HEK293 (cell line): ENCODE measurements at regions of chr15 and their contacts with region 1.

Region 1: DNA sequence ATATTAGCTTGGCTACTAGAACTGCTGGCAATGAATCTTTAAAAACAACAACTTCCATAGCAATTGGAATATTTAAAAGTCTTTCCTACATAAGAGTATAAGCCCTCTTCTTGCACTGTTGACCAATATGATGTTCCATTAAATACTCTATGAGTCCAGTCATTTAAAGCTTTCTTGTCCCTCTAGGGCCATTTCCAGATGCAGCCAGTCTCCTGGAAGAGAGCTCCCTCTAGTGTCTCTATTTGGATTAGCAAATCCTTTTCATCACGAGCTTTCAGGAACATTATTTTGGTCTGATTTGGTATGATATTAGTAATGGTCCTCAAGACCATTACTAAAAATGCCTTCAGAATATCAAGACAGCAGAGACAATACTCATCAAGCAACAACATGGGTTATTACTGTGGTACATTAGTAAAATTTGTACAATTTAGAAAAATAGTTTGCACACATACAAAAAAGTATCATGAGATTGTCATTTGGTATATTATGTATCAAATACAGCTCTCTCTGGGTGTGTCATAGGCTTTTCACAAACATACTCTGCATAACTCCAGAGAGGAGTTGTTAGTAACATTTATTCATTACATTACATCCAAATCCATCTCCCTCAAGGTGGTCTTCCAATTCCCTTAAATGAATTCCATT is 101.3 kb downstream of the DPH6 start:
- H3K4me3 ChIP-seq: no peak overlapping the region
- H3K27ac ChIP-seq: no peak overlapping the region
- H3K4me1 ChIP-seq: no peaks in the 10 kb centered on the region
- CTCF ChIP-seq: 0 out of 2 replicates have a peak, but pooled peaks have one; percentile 28

Region 2: GRCh38 chr15:35078221-35078915 is 366.3 kb before region 1 on chr15:
- CTCF ChIA-PET with region 1: interaction called, 47 read pairs
- POLR2A ChIA-PET with region 1: no interaction called
- H3K4me3 ChIP-seq: no peak overlapping the region
- H3K27ac ChIP-seq: no peak overlapping the region
- H3K4me1 ChIP-seq: no peaks in the 10 kb centered on the region
- CTCF ChIP-seq: peak; percentile 58

Region 3: DNA sequence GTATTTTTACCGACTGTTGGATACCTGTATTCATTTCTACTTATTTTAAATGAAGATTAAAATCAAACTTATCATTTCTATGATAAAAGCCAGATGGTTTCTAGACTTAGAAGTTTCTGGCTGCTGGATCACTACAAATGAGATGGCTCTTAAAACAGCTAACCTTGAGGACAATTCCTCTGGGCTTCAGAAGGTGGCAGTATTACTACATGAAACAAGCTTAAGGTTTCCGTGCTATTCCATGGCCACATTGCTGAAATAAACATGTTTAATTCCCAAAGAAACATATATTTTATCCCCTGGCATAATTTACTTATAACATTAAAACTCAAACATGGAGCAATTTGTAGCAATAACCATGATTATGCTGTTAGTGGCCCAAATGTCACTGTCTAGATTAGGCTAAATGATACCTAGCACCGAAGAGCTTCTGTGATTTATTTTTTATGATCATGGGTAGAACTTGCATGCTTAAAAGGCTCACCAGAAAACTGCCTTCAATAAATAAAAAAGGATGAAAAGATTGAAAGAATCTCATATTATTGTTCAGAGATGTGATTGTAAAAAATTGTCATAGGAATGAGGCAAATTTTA is 155.6 kb before region 1 on chr15:
- CTCF ChIA-PET with region 1: interaction called, 125 read pairs
- POLR2A ChIA-PET with region 1: no interaction called
- H3K4me3 ChIP-seq: no peak overlapping the region
- H3K27ac ChIP-seq: no peak overlapping the region
- H3K4me1 ChIP-seq: no peaks in the 10 kb centered on the region
- CTCF ChIP-seq: peak; percentile 61; the same call in 1 of the 2 replicates